HepG2 (cell line): ENCODE measurements at regions of chr1 and their contacts with region 1.

Region 1: GRCh38 chr1:235075188-235075926 is 53.3 kb downstream of the TOMM20 start:
- DNase-seq: peak; percentile 89
- ATAC-seq: peak; percentile 57
- H3K4me3 ChIP-seq: peak overlapping the region; percentile 56 to 82 (median 58)
- H3K27ac ChIP-seq: peak overlapping the region; percentile 99
- H3K4me1 ChIP-seq: peaks cover 91% of the 10 kb centered on the region
- H3K27me3 ChIP-seq: no peaks in the 10 kb centered on the region; a peak in 1 of 5 replicates
- CTCF ChIP-seq: no peak
- EP300 ChIP-seq: peak in 1 of 2 experiments; percentile 59; a peak in 2 of 4 replicates
- POLR2A ChIP-seq: peak in 1 of 2 experiments; percentile 80; a peak in 2 of 4 replicates
- RAD21 ChIP-seq: no peak

Region 2: DNA sequence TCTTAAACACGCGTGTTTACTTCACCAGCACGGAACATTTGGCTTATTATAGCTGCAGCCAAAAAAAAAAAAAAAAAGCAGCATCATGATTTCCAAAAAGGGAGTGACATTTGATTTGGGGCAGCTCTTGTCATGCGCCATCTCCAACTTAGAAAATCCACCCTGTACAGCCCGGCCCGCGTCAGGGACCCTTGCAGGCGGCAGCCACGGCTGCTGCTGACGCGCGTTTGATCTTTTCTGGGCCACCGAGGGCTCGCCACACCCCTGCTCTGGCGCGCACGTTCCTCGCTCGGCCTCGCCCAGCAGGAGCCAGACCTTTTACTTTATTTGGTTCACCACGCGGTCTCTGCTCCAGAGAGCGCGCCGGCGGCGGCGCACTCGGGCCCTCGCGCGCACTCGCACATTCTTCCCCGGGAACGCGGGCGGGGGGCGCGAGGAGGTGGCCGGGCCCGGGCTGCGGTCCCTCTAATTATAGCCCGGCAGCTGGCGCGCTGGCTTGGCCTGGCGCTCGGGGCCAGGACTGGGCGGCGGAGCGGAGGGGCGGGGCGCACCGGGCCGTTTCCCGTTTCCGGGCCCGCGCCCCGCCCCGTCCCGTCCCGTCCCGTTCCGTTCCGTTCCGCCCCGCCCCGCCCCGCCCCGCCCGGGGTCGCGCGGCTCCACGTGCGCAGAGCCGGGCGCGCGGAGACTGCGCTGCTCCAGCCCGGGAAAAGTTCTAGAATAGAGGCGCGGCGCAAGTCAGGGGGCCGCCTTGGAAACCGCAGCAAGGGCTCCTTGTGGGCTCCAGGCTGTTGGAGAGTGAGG is 475.5 kb before region 1 on chr1:
- CTCF ChIA-PET with region 1: no interaction called
- POLR2A ChIA-PET with region 1: interaction called, 31 read pairs
- in situ Hi-C with region 1: no loop called
- intact Hi-C with region 1: no loop called
- DNase-seq: peak; percentile 85
- ATAC-seq: peak; percentile 85
- H3K4me3 ChIP-seq: peak overlapping the region; percentile 13 to 51 (median 44); a peak in 4 of 6 replicates
- H3K27ac ChIP-seq: peak overlapping the region; percentile 100
- H3K4me1 ChIP-seq: peaks cover 41% of the 10 kb centered on the region
- H3K27me3 ChIP-seq: no peaks in the 10 kb centered on the region; a peak in 1 of 5 replicates
- CTCF ChIP-seq: 0 out of 2 replicates have a peak, but pooled peaks have one; percentile 13
- EP300 ChIP-seq: no peak; a peak in 1 of 4 replicates
- POLR2A ChIP-seq: peak; percentile 26 to 63
- RAD21 ChIP-seq: peak; percentile 81

Region 3: DNA sequence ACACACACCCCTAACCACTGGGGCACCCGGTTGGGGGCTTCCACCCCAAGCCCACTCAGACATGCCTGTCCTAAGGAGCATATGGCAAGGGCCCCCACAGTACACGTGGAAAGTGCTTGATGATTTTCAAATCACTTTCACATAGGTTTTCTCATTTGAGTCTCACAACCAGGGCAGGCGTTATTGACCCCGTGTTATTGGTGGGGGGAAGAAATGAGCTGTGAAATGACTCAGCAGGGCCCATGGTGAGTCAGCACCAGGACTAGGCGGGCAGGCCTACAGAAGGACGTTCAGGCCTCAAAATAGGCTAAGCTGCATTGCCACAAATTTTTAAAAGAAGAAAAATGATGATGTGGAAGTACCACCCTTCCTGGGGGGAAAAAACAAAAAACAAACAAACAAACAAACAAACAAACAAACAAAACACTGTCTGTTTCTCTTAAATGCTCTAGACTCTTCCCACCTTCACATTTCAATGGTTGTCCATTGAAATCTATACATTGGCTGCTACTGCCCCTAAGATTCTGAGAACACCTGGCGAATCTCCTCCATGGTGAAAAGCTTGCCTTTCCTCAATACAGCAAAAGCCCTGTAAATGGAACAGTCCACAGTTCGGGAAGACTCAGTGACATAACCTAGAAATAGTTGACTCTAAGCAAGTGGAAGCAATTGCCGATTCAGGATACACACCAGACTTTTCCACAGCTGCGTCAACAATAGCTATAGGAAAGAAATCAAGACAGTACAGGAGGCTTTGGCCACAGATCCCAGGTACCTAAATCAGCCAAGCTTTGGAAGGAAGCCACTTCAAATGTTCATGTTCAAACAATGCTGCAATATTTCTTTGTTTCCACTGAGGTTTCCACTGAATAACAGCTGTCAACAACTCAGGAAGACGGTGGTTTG is 181.4 kb before region 1 on chr1:
- CTCF ChIA-PET with region 1: no interaction called
- POLR2A ChIA-PET with region 1: no interaction called
- in situ Hi-C with region 1: loop called (anchors 10 kb)
- intact Hi-C with region 1: no loop called
- DNase-seq: peak; percentile 20
- ATAC-seq: no peak
- H3K4me3 ChIP-seq: no peak overlapping the region
- H3K27ac ChIP-seq: no peak overlapping the region
- H3K4me1 ChIP-seq: peaks cover 52% of the 10 kb centered on the region
- H3K27me3 ChIP-seq: no peaks in the 10 kb centered on the region
- CTCF ChIP-seq: no peak
- EP300 ChIP-seq: no peak; a peak in 1 of 4 replicates
- POLR2A ChIP-seq: no peak
- RAD21 ChIP-seq: no peak

Region 4: DNA sequence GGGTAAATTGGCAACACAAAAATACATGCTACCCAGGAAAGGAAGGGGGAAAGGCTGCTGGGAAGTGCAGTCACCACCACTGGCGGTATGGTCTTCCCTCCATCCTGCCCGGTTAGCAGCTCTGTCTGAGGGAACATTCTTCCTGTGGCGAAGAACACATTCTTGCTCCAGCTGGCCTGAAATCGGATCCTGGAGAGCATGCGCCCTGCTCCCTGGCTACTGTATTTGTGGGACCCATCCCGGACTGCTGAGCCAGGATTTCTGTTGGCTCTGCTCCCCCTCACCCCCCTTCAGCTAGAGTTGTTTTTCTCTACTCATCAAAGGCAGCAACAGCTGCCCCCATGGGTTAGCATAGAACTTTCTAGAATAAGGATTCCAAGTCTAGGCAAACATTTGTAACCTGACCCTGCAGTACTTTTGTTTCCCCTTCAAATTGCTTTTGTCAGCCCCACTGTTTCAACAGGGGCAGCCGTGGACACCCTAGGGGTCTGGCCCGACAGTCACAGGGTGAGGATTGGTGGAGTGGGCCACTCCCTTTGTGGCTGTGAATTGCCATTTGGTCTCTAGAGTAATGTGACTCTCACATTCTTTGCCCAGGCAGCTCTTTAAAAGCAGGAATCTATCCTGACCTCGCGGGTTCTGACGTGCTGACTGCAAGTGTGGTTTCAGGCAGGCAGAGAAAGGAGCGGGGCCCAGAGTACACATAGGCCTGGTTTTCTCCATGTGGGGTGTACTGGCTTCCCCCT is 104.5 kb before region 1 on chr1:
- CTCF ChIA-PET with region 1: no interaction called
- POLR2A ChIA-PET with region 1: interaction called, 309 read pairs
- in situ Hi-C with region 1: loop called (anchors 5 kb)
- intact Hi-C with region 1: no loop called
- DNase-seq: peak; percentile 81
- ATAC-seq: no peak
- H3K4me3 ChIP-seq: no peak overlapping the region
- H3K27ac ChIP-seq: peak overlapping the region; percentile 100
- H3K4me1 ChIP-seq: peaks cover 73% of the 10 kb centered on the region
- H3K27me3 ChIP-seq: no peaks in the 10 kb centered on the region; a peak in 1 of 5 replicates
- CTCF ChIP-seq: no peak
- EP300 ChIP-seq: 0 out of 4 replicates have a peak, but pooled peaks of 1 of the 2 experiments have one; percentile 19
- POLR2A ChIP-seq: peak in 1 of 2 experiments; percentile 44; a peak in 1 of 4 replicates
- RAD21 ChIP-seq: no peak

Region 5: GRCh38 chr1:234997201-234997895 is 78.0 kb before region 1 on chr1:
- CTCF ChIA-PET with region 1: no interaction called
- POLR2A ChIA-PET with region 1: interaction called, 20 read pairs
- in situ Hi-C with region 1: no loop called
- intact Hi-C with region 1: no loop called
- DNase-seq: peak; percentile 94
- ATAC-seq: peak; percentile 89
- H3K4me3 ChIP-seq: peak overlapping the region; percentile 44 to 69 (median 50)
- H3K27ac ChIP-seq: peak overlapping the region; percentile 62
- H3K4me1 ChIP-seq: peaks cover 50% of the 10 kb centered on the region
- H3K27me3 ChIP-seq: no peaks in the 10 kb centered on the region
- CTCF ChIP-seq: no peak; the same call in 1 of the 2 replicates
- EP300 ChIP-seq: peak in 1 of 2 experiments; percentile 61; a peak in 2 of 4 replicates
- POLR2A ChIP-seq: peak; percentile 56 to 61; a peak in 3 of 4 replicates
- RAD21 ChIP-seq: no peak

Region 6: DNA sequence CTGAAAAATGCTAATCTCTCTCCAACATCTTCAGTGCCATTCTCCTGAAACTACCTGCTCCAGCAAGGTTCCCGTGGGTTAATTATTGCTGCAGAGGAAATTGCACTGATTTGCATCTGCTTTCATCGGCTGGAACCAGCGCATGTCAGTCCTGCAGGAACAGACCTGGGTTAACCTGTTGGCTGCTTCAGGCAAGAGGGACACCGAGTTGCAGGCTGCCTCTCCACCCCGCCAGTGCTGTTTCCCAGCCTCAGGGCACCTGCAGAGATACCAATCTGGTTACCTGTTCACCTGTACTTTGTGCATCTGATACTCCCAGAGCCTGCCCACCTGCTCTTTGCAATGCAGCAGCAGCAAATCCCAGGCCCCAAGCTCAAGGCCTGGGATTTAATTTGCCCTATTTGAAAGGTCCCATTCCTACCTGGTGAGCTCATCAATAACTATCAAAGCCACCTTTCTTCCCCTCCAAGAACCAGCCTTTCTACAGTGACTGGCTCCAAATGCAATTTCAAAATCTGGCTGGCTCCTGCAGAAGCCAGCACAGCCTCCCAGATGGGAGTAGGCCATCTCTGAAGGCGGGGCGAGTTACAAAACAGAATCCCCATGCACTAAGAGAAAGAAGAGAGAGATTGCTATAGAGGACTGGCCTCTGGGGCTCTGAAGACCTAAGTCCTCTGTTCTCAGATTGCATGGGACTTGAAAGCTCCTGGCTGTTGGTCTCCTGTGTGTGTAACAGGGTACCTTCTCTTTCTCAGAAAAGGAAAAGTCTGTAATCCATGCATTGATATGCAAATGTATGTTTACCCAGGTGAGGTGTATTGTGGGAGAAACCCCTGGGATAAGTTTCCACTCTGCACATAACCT is 14.5 kb before region 1 on chr1:
- CTCF ChIA-PET with region 1: no interaction called
- POLR2A ChIA-PET with region 1: interaction called, 109 read pairs
- in situ Hi-C with region 1: no loop called
- intact Hi-C with region 1: no loop called
- DNase-seq: peak; percentile 81
- ATAC-seq: peak; percentile 31
- H3K4me3 ChIP-seq: no peak overlapping the region
- H3K27ac ChIP-seq: peak overlapping the region; percentile 82
- H3K4me1 ChIP-seq: peaks cover 64% of the 10 kb centered on the region
- H3K27me3 ChIP-seq: no peaks in the 10 kb centered on the region
- CTCF ChIP-seq: no peak
- EP300 ChIP-seq: no peak
- POLR2A ChIP-seq: peak in 1 of 2 experiments; percentile 50; a peak in 2 of 4 replicates
- RAD21 ChIP-seq: no peak

Region 7: GRCh38 chr1:235199441-235199840 is 124.1 kb after region 1 on chr1:
- CTCF ChIA-PET with region 1: no interaction called
- POLR2A ChIA-PET with region 1: no interaction called
- in situ Hi-C with region 1: no loop called
- intact Hi-C with region 1: no loop called
- DNase-seq: no peak
- ATAC-seq: no peak
- H3K4me3 ChIP-seq: no peak overlapping the region
- H3K27ac ChIP-seq: no peak overlapping the region
- H3K4me1 ChIP-seq: no peaks in the 10 kb centered on the region
- H3K27me3 ChIP-seq: no peaks in the 10 kb centered on the region
- CTCF ChIP-seq: no peak
- EP300 ChIP-seq: no peak
- POLR2A ChIP-seq: no peak
- RAD21 ChIP-seq: no peak